Calu3 (cell line): ENCODE measurements at regions of chrX and their contacts with region 1.

Region 1: DNA sequence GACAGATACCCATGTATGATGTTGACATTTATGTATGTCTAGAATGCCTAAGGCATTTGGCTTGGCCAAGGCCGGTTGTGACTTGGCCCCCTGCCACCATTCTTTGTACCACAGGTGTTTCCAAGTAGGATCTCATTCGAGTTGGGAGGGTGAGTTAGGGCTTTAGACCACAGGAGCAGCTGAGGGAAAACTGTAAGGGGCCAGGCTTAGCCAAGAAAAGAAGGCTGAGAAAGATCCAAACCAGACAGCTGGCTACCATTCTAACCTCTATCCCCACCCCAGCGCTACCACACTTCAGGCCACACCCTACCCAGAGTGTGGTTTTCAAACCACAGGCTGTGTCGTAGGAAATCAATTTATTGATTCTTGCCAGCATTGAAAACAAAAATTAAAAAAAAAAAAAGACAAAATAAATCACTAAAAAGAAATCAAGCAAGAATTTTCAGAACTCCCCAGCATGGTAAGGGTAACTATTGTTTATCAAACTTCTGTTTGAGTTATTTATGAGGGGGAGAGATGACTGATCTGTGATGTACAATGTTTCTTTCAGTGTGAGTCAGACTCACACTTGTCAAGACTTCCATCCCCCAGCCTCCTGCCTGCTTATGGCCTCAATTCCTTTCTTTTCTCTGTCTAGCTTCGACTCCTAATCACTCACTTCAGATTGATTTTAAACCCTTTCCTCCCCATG is 9.9 kb downstream of the TMSB4X start:
- DNase-seq: peak; percentile 85
- H3K4me3 Mint-ChIP-seq: peak overlapping the region; percentile 31
- H3K27ac Mint-ChIP-seq: peak overlapping the region; percentile 89
- H3K4me1 Mint-ChIP-seq: peaks cover 64% of the 10 kb centered on the region
- H3K27me3 Mint-ChIP-seq: no peaks in the 10 kb centered on the region
- CTCF ChIP-seq: no peak

Region 2: DNA sequence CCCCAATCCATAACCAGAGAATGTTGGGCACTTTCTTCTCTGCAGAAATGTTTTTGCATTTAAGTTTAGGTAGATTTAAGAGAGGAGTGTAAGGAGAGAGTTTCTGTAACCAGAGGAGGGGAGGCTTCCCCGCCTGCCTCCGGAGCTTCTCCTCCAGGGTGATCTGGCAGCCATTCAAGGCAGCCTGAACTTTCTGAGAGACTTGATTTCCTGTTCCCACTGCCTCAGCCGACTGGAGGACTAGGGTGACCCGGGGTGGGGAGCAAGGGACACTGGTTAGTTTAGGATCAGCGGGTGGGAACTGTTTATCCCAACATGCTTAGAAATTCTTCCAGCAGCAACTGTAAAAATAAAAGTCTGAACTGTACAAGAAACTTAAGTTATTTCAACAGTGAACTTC is 44.6 kb after region 1 on chrX:
- CTCF ChIA-PET with region 1: no interaction called
- intact Hi-C with region 1: loop called (anchors 2 kb)
- DNase-seq: peak; percentile 59
- H3K4me3 Mint-ChIP-seq: peak overlapping the region; percentile 36
- H3K27ac Mint-ChIP-seq: peak overlapping the region; percentile 95
- H3K4me1 Mint-ChIP-seq: peaks cover 48% of the 10 kb centered on the region
- H3K27me3 Mint-ChIP-seq: no peaks in the 10 kb centered on the region
- CTCF ChIP-seq: no peak

Region 3: DNA sequence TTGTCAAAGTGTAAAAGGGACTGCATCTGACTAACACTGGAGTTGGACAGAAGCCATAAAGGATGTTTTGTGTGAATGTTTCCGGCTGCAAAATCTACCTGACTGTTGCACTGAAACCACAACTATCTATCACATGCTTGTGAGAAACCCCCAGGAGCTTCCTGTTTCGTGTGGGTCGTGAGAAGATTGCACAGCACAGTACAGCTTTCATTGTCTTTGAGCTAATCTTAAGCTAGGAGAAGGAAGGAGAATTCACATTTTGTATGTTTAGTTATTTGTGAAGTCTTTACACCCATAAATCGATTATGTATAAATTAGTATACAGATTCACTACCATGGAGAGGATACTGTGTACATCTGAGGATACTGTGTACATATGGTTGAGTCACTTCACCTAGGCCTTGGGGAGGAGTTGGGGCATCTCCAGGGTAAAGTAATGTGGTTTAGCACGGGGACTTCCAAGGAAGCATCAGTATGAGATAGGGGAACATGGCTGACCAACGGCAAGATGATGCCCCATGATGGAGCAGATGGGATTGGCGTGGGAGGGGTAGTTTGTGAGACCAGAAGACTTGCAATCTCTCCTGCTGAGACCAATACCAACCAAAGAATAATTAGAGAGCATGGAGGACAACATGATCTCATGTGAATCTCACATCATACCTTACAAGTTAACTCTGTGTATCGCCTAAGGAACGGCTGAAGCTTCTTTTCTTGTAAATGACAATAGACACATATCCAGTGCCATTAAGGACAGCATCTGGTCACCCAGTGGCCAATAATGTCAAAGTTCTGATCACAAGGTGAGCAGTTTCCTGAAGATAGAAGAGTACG is 102.8 kb after region 1 on chrX:
- CTCF ChIA-PET with region 1: interaction called, 3 read pairs
- intact Hi-C with region 1: loop called (anchors 2 kb)
- DNase-seq: peak; percentile 50
- H3K4me3 Mint-ChIP-seq: no peak overlapping the region
- H3K27ac Mint-ChIP-seq: peak overlapping the region; percentile 95
- H3K4me1 Mint-ChIP-seq: peaks cover 25% of the 10 kb centered on the region
- H3K27me3 Mint-ChIP-seq: no peaks in the 10 kb centered on the region
- CTCF ChIP-seq: no peak

Region 4: DNA sequence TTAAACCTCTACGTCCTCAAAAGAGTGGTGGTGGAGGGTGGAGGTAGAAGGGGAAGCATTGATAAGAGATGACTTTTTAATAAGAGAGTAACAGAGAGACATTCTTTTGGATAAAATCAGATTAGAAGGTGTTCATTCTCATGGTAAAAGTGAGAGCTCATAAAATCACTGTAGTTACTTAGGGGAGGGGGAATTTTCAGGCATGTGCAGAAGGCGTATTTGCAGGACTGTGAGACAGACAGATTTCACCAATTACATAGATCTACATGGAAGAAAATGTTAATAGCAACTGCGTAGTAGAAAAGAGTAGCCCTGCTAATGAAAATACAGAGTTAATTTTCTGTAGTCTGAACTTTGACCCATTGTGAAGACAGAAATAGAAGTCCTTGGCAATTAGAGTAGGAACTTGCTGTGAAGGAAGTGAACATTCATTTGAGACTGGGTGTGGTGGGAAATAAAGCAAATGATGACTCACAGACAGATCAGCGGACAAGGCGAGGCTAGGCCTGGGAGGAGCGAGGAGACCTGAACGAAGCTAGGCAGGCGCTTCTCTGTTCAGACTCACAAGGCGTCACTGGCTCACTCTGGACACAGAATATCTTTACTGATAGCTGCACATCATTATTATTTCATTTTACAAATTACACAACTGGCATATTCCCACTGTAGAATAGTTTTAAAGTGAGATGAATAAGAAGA is 116.8 kb after region 1 on chrX:
- CTCF ChIA-PET with region 1: no interaction called
- intact Hi-C with region 1: loop called (anchors 2 kb)
- DNase-seq: peak; percentile 78
- H3K4me3 Mint-ChIP-seq: peak overlapping the region; percentile 41
- H3K27ac Mint-ChIP-seq: peak overlapping the region; percentile 93
- H3K4me1 Mint-ChIP-seq: peaks cover 57% of the 10 kb centered on the region
- H3K27me3 Mint-ChIP-seq: no peaks in the 10 kb centered on the region
- CTCF ChIP-seq: no peak

Region 5: GRCh38 chrX:13223868-13224555 is 239.2 kb after region 1 on chrX:
- CTCF ChIA-PET with region 1: no interaction called
- intact Hi-C with region 1: loop called (anchors 5 kb)
- DNase-seq: peak; percentile 50
- H3K4me3 Mint-ChIP-seq: peak overlapping the region; percentile 21
- H3K27ac Mint-ChIP-seq: peak overlapping the region; percentile 92
- H3K4me1 Mint-ChIP-seq: peaks cover 54% of the 10 kb centered on the region
- H3K27me3 Mint-ChIP-seq: no peaks in the 10 kb centered on the region
- CTCF ChIP-seq: no peak